ENCODE measurements at regions of chr6 and their contacts with region 1.

Region 1: DNA sequence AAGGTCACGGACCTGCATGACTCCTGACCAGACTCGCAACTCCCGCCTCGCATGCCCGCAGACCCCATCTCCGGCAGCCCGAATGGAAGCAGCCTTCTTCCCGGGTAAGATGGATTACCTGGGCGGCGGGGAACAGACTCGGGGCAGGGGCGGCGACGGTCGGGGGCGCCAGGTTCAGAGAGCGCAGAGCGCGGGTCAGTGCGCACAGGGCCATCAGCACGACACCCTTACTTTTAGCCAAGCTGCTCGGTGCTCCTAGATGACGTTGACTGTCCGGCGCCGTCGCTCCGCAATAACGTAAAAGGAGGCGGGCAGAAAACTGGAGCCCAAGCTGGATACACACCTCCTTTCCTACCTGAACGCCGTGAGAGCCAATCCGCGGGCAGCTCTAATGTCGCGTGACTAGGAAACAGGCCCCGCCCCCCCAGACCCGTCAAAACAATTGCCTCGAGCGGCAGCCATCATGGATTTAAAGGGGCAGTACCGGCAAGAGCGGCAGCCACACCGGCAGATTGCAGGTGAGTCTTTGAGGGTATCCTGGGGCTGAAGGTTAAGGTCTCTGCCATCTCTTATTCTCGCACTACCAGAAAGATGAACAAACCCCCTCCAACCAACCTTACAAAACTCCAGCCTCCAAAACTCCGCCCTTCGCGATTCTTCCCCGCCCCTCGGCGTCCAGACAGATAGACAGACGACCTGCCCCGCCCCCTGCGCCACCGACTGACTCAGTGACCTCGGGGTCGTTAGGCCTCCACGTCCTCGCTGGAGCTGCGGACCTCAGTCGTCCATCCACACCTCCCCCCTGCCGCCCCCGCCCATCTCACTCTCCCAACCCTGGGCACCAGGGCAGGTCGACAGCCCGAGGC is at the starts of genes KLC4 and MRPL2:
- DNase-seq: peak; percentile 100
- H3K4me3 Mint-ChIP-seq: peak within 1 kb of the TSS; percentile 89
- H3K27ac Mint-ChIP-seq: peak within 1 kb of the TSS; percentile 95
- H3K4me1 Mint-ChIP-seq: peaks cover 30% of the 10 kb centered on the region
- H3K27me3 Mint-ChIP-seq: no peaks in the 10 kb centered on the region
- total RNA-seq, gene KLC4: 11.0 to 11.9 TPM
- total RNA-seq, gene MRPL2: 91.0 to 95.4 TPM

Region 2: DNA sequence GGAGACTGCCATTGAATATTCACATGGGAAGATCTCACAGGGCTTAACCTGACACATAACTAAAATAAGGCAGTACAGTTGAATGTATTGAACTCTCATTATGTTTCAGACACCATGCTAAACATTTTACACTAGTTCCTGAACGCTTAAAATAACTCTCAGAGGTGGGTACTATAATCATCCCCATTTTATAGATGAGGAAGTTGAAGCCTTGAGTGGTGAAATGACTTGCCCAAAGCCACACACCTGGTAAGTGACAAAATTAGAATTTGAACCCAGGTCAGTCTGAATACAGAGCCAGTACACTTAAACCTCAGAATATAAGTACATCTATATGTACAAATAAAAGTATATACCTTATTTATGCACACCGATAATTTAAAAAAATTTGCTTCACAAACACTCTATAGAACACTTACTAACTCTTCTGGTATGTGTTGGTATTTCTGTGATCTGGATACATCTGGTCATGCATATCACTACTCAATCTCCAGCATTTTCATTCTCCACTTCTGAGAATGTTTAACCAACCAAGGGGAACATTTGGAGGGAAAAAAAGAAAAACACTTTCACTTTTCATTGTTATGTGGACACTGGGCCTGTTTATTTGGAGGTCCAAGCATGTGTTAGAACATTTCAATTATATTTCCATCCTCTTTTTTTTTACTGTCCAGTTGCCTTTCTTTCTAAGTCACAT is 282.1 kb before region 1 on chr6:
- CTCF ChIA-PET with region 1: no interaction called
- POLR2A ChIA-PET with region 1: no interaction called
- intact Hi-C with region 1: loop called (anchors 10 kb)
- DNase-seq: no peak
- H3K4me3 Mint-ChIP-seq: no peak overlapping the region
- H3K27ac Mint-ChIP-seq: peak overlapping the region; percentile 79
- H3K4me1 Mint-ChIP-seq: peaks cover 66% of the 10 kb centered on the region
- H3K27me3 Mint-ChIP-seq: no peaks in the 10 kb centered on the region

Region 3: DNA sequence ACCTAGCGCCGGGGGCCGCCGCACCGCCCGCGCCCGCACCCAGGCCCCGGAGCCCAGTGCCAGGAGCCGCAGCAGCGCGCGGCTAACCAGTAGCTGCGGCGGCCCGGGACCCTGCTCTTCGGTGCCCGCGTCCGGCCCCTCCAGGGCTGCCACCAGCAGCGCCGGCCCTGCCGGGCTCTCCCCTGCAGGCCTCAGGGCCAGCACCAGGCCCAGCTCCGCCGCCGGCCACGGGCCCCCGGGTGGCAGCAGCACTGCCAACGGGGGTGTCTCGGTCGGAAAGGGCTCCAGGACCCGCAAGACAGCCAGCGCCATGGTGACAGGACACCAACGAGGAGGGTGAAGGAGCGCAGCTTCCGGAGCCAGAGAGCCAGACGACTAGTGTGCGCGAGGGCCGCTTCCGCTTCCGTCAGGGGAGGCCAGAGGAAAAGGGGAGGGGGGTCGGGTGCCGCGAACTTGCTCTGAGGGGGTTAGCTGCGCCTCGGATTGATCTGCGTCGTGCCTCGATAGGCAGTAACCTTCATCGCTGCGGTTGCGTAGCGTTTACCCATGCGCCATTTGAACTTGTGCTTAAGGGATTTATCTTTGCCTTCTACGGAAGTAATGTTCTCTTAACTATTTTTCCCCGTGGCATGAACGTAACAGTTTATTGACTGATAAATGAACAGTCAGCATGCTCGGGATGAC is 80.4 kb before region 1 on chr6 and contains the start of gene PEX6:
- CTCF ChIA-PET with region 1: interaction called, 3 read pairs
- POLR2A ChIA-PET with region 1: interaction called, 4 read pairs
- intact Hi-C with region 1: loop called (anchors 2 kb)
- DNase-seq: peak; percentile 97
- H3K4me3 Mint-ChIP-seq: peak within 1 kb of the TSS; percentile 94
- H3K27ac Mint-ChIP-seq: peak within 1 kb of the TSS; percentile 98
- H3K4me1 Mint-ChIP-seq: peaks cover 56% of the 10 kb centered on the region
- H3K27me3 Mint-ChIP-seq: no peaks in the 10 kb centered on the region
- total RNA-seq, gene PEX6: 25.6 to 26.4 TPM

Region 4: GRCh38 chr6:43029120-43029519 is 30.3 kb before region 1 on chr6:
- CTCF ChIA-PET with region 1: no interaction called
- POLR2A ChIA-PET with region 1: no interaction called
- intact Hi-C with region 1: no loop called
- DNase-seq: no peak
- H3K4me3 Mint-ChIP-seq: no peak overlapping the region
- H3K27ac Mint-ChIP-seq: no peak overlapping the region
- H3K4me1 Mint-ChIP-seq: peaks cover 8% of the 10 kb centered on the region
- H3K27me3 Mint-ChIP-seq: no peaks in the 10 kb centered on the region

Measured in activated CD4-positive, alpha-beta memory T cell treated with anti-CD3 and anti-CD28 coated beads for 36 hours (primary cell).